ENCODE measurements at regions of chr1 and their contacts with region 1.

Region 1: DNA sequence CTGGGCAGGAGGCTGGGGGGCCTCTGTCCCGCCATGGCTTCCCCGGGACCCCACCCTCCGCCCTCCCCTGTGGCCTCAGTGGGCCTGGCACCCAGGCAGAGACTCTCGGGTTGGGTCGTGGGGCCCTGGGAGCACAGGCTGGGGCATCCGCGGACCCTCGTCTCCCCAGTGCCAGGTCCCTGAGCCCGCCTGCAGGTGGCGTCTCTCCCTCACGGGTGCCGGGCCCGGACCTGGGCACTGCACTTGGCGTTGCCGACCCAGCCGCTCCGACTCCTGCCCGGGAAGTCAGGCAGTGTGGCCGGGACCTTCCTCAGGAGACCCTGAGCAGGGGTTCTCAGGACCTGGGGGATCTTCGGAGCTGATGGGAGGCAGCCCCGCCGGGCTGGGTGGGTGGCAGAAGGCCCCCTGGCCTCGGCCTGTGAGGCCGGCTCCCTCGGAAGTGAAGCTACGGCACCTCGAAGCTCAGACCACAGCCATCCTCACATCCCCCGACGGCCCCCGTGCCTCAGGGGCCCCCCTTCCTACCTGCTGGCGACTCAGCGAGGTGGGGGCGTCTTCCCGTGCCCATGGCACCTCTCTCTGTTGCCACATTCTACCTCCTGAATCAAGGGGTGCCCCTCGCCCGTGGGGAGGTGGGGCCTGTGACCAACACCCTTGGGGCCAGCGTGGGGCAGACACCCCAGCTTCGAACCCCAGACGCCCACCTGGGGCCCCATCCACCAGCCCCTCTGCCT is 6.4 kb upstream of the C1orf159 start:
- DNase-seq: peak; percentile 87
- H3K4me3 Mint-ChIP-seq: no peak overlapping the region
- H3K27ac Mint-ChIP-seq: no peak overlapping the region
- H3K4me1 Mint-ChIP-seq: peaks cover 10% of the 10 kb centered on the region
- H3K27me3 Mint-ChIP-seq: peaks cover 15% of the 10 kb centered on the region

Region 2: GRCh38 chr1:1206376-1207260 is 84.4 kb after region 1 on chr1 and contains the start of gene TNFRSF18:
- CTCF ChIA-PET with region 1: interaction called, 10 read pairs
- POLR2A ChIA-PET with region 1: interaction called, 4 read pairs
- DNase-seq: peak; percentile 62
- H3K4me3 Mint-ChIP-seq: peak within 1 kb of the TSS; percentile 78
- H3K27ac Mint-ChIP-seq: peak within 1 kb of the TSS; percentile 99
- H3K4me1 Mint-ChIP-seq: peaks cover 39% of the 10 kb centered on the region
- H3K27me3 Mint-ChIP-seq: no peaks in the 10 kb centered on the region
- total RNA-seq, gene TNFRSF18: 115 to 116 TPM

Region 3: DNA sequence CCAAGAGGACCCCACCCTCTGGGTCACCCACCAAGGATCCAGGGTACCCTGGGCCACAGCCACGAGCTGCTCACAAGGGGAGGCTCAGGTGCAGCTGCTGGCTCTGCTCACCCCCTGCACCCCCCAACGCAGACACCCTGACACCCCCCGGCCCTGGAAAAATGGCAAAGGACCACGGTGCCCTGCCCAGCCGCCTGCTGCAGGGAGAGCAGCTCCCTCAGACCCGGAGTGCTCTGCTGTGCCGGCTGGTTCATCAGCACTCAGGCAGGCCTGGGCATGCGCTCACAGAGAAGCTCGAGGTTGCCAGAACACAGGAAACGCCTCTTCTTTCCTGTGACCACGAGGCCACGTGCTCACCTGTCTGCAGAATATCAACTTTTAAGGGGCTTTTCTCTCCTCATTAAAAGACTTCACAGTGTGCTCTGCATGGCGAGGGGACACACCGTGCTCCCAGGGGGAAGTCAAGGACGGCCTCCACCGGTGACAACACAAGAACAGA is 128.6 kb after region 1 on chr1:
- CTCF ChIA-PET with region 1: interaction called, 20 read pairs
- POLR2A ChIA-PET with region 1: no interaction called
- DNase-seq: peak; percentile 82
- H3K4me3 Mint-ChIP-seq: no peak overlapping the region
- H3K27ac Mint-ChIP-seq: peak overlapping the region; percentile 54
- H3K4me1 Mint-ChIP-seq: peaks cover 16% of the 10 kb centered on the region
- H3K27me3 Mint-ChIP-seq: peaks cover 4% of the 10 kb centered on the region

Region 4: DNA sequence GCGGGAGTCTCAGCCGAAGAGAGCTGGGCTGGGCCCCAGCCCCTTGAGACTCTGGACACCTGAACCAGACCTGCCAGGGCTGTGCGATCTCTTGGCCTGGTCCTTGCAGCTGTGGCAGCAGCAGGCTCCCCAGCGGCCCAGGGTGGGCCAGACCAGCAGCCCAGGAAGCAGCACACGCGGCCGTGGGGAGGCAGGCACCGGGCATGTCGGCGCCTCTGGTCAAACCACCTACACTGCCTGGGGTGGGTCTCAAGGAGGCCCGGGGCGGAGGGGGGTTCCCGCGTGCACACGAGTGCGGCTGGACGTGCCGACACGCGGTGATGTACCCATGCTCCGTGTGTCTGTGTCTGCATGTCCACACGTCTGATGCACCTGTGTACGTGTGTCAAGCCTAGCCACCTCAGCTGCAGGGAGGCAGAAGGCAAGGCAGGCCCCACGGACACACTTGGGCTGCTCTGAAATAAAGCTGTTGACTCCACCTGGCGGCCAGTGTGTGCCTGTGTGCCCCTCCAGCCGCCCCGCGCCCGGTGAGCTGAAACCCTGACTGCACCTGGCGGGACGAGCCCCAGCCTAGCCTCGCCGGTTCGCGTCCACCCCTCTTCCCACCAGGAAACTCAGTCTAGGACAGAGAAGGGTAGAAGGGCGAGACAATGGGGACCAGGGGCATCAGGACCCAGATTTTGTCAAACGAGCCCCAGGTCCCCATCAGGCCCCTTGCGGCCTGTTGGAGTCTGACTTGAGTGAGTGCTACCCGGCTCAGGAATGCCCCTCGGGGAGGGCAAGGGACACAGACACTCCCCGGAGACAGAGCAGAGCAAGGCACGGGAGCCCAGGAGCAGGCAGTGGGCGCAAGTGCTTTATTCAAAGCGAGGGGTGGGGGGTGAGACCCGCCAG is 169.6 kb after region 1 on chr1:
- CTCF ChIA-PET with region 1: interaction called, 36 read pairs
- POLR2A ChIA-PET with region 1: interaction called, 11 read pairs
- DNase-seq: peak; percentile 72
- H3K4me3 Mint-ChIP-seq: no peak overlapping the region
- H3K27ac Mint-ChIP-seq: no peak overlapping the region
- H3K4me1 Mint-ChIP-seq: no peaks in the 10 kb centered on the region
- H3K27me3 Mint-ChIP-seq: no peaks in the 10 kb centered on the region